Heart left ventricle (tissue), 16 donors: ENCODE measurements at regions of chr20 and their contacts with region 1.

Region 1: DNA sequence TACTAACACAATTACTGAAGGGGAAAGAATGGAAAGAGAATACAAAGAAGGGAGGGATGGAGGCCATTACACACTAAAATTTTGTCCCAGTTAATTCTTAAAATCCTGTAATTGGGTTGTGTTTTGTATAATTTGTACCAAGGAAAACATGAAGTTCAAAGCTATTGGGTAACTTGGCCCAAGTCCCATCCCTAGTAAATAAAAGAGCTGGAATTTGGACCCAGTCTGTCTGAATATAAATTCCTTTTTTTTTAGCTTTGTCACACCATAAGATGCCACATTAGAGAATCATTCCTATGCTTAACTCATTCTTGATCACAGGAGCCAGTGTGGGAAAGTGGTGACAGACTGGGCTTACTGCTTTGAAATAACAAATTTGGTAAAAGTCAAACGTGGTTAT is 66.8 kb upstream of the CBLN4 start:
- DNase-seq: no peak
- ATAC-seq: no peak
- H3K4me3 ChIP-seq: no peak overlapping the region
- H3K27ac ChIP-seq: no peak overlapping the region
- H3K4me1 ChIP-seq: no peaks in the 10 kb centered on the region
- H3K27me3 ChIP-seq: no peaks in the 10 kb centered on the region
- CTCF ChIP-seq: no peak
- POLR2A ChIP-seq: no peak

Region 2: DNA sequence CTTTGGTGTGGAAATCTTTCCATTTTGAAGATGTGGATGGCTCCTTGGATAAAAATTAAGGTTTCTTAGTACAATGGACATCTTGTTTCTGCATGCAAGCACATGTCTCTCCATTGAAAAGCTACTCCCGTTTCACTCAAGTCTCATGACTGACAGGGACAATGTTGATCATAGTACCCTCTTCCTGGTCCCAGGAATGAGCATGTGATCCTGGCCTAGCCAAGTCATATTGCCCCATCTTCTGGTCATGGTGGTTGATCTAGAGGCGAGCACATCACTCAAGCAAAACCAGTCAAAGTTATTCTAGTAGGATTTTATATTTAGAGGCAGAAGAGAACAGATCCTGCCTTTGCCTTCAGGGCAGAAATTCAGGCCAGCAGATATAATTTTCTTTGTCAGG is 54.6 kb before region 1 on chr20:
- intact Hi-C with region 1: loop called in 1 of 10 experiments (anchors 10 kb)
- DNase-seq: no peak
- ATAC-seq: no peak
- H3K4me3 ChIP-seq: no peak overlapping the region
- H3K27ac ChIP-seq: no peak overlapping the region
- H3K4me1 ChIP-seq: no peaks in the 10 kb centered on the region
- H3K27me3 ChIP-seq: no peaks in the 10 kb centered on the region
- CTCF ChIP-seq: no peak
- POLR2A ChIP-seq: no peak